ENCODE measurements at regions of chr1 and their contacts with region 1.

Region 1: DNA sequence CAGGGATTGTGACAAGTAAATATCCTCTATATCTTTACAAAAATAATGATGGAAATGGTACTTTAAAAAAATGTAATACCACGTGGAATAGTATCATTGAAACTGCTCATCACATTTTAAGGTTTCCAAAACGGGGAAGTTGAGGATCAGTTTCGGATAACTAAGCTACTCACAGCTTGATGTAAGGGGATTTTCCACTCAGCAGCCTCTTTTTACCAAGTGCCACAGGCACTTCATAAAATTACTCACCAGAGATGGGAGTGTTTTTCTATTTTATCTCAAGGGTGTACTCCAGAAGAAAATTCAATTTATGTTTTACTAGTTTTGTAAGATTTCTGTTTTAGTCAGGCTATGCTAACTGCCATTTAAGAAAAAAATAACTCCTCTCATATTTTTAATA is 91.7 kb downstream of the TPR start:
- DNase-seq: no peak
- ATAC-seq: no peak
- H3K4me3 ChIP-seq: no peak overlapping the region
- H3K4me3 Mint-ChIP-seq: no peak overlapping the region
- H3K27ac ChIP-seq: no peak overlapping the region
- H3K27ac Mint-ChIP-seq: no peak overlapping the region
- H3K4me1 ChIP-seq: peaks cover 2% of the 10 kb centered on the region
- H3K4me1 Mint-ChIP-seq: peaks cover 25% of the 10 kb centered on the region
- H3K27me3 ChIP-seq: no peaks in the 10 kb centered on the region
- H3K27me3 Mint-ChIP-seq: no peaks in the 10 kb centered on the region
- CTCF ChIP-seq: no peak

Region 2: DNA sequence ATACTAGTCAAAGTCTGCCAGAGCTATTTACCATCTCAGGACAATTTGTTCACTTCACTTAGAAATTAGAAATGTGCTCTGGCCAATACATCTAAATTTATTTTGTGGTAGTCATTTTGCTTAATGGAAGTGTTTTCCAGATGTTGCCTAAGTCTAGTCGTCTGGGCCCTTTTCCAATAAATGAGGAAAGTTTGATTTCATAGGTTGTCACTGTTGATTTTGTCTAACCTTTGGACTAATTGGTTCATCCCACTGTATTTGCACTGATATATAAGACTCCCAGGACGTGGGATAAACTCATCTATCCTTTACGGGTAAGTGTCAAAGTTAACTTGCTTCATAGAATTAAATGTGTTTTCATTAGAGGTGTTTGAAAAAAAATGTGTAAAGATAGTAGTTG is 12.6 kb after region 1 on chr1:
- CTCF ChIA-PET with region 1: no interaction called
- POLR2A ChIA-PET with region 1: no interaction called
- intact Hi-C with region 1: loop called in 1 of 2 experiments (anchors 2 kb)
- DNase-seq: no peak
- ATAC-seq: no peak
- H3K4me3 ChIP-seq: no peak within 1 kb of the TSS
- H3K4me3 Mint-ChIP-seq: no peak within 1 kb of the TSS
- H3K27ac ChIP-seq: no peak within 1 kb of the TSS
- H3K27ac Mint-ChIP-seq: no peak within 1 kb of the TSS
- H3K4me1 ChIP-seq: peaks cover 7% of the 10 kb centered on the region
- H3K4me1 Mint-ChIP-seq: peaks cover 31% of the 10 kb centered on the region
- H3K27me3 ChIP-seq: no peaks in the 10 kb centered on the region
- H3K27me3 Mint-ChIP-seq: no peaks in the 10 kb centered on the region
- CTCF ChIP-seq: no peak

Region 3: GRCh38 chr1:186559601-186560116 is 276.3 kb after region 1 on chr1:
- CTCF ChIA-PET with region 1: no interaction called
- POLR2A ChIA-PET with region 1: no interaction called
- intact Hi-C with region 1: no loop called
- DNase-seq: no peak
- ATAC-seq: no peak
- H3K4me3 ChIP-seq: no peak overlapping the region
- H3K4me3 Mint-ChIP-seq: no peak overlapping the region
- H3K27ac ChIP-seq: no peak overlapping the region
- H3K27ac Mint-ChIP-seq: no peak overlapping the region
- H3K4me1 ChIP-seq: no peaks in the 10 kb centered on the region
- H3K4me1 Mint-ChIP-seq: no peaks in the 10 kb centered on the region
- H3K27me3 ChIP-seq: peaks cover 0 to 5% of the 10 kb centered on the region in 2 experiments
- H3K27me3 Mint-ChIP-seq: no peaks in the 10 kb centered on the region
- CTCF ChIP-seq: no peak